Cardiac septum (tissue), 1 donor: ENCODE measurements at regions of chr7 and their contacts with region 1.

Region 1: GRCh38 chr7:159098811-159099655 is 45.6 kb downstream of the VIPR2 start:
- DNase-seq: peak; percentile 76

Region 2: GRCh38 chr7:158549616-158550393 is 549.2 kb before region 1 on chr7:
- intact Hi-C with region 1: no loop called
- DNase-seq: no peak

Region 3: GRCh38 chr7:158976849-158977593 is 122.0 kb before region 1 on chr7:
- intact Hi-C with region 1: no loop called
- DNase-seq: peak; percentile 88

Region 4: DNA sequence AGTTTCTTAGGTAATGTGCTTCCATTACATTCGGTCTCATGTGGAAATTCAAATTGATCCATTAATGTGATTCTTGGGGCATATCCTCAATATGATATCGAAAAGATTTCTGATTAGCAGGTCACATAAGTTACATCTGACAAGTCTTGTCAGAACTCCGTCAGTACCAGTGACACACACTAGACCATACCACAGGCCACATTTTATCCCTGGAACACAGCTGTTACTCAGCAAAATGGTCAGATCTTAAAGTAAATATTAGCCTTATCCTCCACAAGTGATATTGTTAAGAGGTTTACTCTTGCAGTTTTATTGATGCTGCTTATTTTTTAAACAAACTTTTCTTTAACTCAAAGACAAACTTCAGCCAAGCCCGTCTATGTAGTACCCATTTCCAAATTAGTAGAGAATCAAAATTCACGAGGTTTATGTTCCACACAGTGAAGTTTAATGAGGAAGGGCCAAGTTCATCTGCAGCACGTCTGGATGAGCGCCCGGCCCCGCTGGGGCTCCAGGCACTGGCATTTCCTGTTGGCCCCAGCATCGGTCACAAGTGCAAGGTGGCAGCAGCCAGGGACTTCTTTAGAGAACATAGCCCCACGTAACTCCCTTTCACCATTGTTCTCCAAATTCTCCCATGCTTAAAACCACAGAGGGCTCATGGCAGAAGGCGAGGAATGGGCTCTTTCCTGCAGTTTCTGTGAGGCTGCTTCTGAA is 86.5 kb before region 1 on chr7:
- intact Hi-C with region 1: loop called (anchors 5 kb)
- DNase-seq: peak; percentile 85

Region 5: DNA sequence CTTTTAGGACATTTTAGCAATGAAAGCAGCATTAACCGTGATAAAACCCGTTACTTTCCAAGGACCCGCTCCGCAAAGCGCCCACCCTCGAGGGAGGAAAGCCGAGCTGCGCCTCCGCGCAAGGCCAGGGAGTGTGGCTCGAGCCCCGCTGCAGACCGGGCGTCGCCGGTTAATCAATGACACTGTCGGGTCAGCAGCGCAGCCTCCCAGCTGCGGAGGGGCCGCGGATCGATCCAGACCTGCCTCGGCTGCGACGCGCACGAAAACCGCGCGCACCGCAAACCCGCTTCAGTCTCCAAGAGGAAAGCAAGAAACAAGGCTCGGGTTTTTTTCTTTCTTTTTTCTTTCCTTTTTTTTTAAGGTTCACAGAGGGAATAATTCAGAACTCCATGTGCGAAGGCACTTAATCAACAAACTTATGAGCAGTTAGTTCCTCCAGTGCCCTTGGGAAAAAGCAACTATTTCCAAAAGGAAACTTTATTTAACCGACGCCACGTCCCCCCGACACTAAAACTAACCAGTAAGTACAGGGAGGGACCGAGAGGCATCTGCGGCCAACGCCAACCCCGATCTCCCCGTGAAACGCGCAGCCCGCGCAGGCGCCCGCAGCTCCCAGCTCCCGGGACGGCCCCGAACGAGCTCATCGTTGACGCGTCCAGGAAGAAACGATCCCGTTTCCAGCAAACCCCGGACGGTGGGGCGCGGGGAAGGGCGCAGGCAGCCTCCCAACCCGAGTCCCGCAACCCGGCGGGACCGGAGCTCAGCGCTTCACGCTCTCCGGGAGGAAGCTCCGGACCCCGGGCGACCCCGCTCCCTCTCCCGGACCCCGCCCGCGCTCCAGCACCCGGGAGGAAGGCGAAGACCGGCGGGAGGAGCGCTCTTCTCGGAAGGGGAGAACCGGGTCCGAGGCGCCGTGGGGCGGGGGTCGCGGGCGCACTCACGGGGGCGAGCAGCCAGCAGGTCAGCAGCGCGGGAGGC is 45.0 kb after region 1 on chr7:
- intact Hi-C with region 1: loop called (anchors 5 kb)
- DNase-seq: peak; percentile 74